Adrenal gland (tissue), 19 donors: ENCODE measurements at regions of chr4 and their contacts with region 1.

Region 1: GRCh38 chr4:156475322-156475721 is 496.3 kb downstream of the PDGFC start:
- DNase-seq: peak in 1 of 7 donors; percentile 2
- H3K4me3 ChIP-seq: no peak overlapping the region
- H3K27ac ChIP-seq: no peak overlapping the region
- H3K4me1 ChIP-seq: no peaks in the 10 kb centered on the region
- H3K27me3 ChIP-seq: no peaks in the 10 kb centered on the region
- CTCF ChIP-seq: peak; percentile 13 to 68 (median 54)
- POLR2A ChIP-seq: no peak

Region 2: GRCh38 chr4:157052429-157053040 is 577.2 kb after region 1 on chr4:
- intact Hi-C with region 1: loop called in 1 of 2 experiments (anchors 5 kb)
- DNase-seq: no peak
- H3K4me3 ChIP-seq: no peak overlapping the region
- H3K27ac ChIP-seq: no peak overlapping the region
- H3K4me1 ChIP-seq: no peaks in the 10 kb centered on the region
- H3K27me3 ChIP-seq: no peaks in the 10 kb centered on the region
- CTCF ChIP-seq: no peak
- POLR2A ChIP-seq: no peak

Region 3: DNA sequence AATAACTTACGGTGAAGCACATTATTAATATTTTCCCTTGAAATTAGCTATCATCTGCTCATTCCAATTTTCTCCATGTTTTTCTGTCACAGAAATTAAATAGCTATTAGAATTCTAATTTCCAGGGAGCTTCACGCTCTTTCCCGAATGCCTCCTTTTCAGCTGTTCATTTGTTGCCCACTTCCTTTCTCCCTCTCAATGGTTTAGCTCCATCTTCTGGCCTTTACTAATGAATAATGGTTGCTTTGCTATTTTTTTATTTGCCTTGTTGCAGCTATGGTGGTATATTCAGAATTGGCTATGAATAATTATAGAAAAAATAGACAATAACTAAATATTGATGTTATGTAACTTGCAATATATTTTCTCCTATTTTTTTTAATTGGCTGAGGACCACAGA is 815.7 kb after region 1 on chr4:
- intact Hi-C with region 1: no loop called
- DNase-seq: no peak
- H3K4me3 ChIP-seq: no peak overlapping the region
- H3K27ac ChIP-seq: no peak overlapping the region
- H3K4me1 ChIP-seq: no peaks in the 10 kb centered on the region
- H3K27me3 ChIP-seq: no peaks in the 10 kb centered on the region
- CTCF ChIP-seq: no peak
- POLR2A ChIP-seq: no peak